Activated B cell treated with CpG ODN at 0.5 μM for 24 hours (primary cell): ENCODE measurements at regions of chr19 and their contacts with region 1.

Region 1: GRCh38 chr19:2663920-2664571 is 38.4 kb downstream of the GNG7 start:
- DNase-seq: peak; percentile 74
- ATAC-seq: peak; percentile 89
- H3K4me3 Mint-ChIP-seq: peak overlapping the region; percentile 64
- H3K27ac Mint-ChIP-seq: peak overlapping the region; percentile 94
- H3K4me1 Mint-ChIP-seq: peaks cover 57% of the 10 kb centered on the region
- H3K27me3 Mint-ChIP-seq: no peaks in the 10 kb centered on the region
- CTCF ChIP-seq: no peak

Region 2: DNA sequence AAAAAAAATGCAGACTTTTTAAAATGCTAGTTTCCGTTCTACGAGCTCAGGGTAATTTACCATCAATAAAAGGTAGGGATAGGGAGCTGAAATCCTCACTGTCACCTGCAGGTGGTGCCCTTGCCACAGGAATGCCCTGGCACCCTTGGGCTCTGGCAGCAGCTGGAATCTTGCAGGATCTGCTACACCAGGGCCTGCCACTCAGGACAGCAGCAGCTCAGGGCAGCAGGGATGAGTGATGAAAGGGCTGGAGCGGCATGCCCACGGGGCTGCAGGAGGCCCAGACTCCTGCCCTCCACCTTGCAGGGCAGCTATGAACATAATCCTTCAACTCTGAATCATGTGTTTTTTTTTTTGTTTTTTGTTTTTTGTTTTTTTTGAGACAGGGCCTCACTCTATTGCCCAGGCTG is 15.5 kb before region 1 on chr19:
- CTCF ChIA-PET with region 1: interaction called, 18 read pairs
- POLR2A ChIA-PET with region 1: interaction called, 9 read pairs
- intact Hi-C with region 1: no loop called
- DNase-seq: peak; percentile 75
- ATAC-seq: peak; percentile 87
- H3K4me3 Mint-ChIP-seq: no peak overlapping the region
- H3K27ac Mint-ChIP-seq: peak overlapping the region; percentile 35
- H3K4me1 Mint-ChIP-seq: peaks cover 43% of the 10 kb centered on the region
- H3K27me3 Mint-ChIP-seq: no peaks in the 10 kb centered on the region
- CTCF ChIP-seq: no peak

Region 3: GRCh38 chr19:2702162-2703076 is 38.4 kb after region 1 on chr19 and contains the start of gene GNG7:
- CTCF ChIA-PET with region 1: interaction called, 3 read pairs
- POLR2A ChIA-PET with region 1: interaction called, 24 read pairs
- intact Hi-C with region 1: loop called (anchors 1 kb)
- DNase-seq: peak; percentile 99
- ATAC-seq: peak; percentile 99
- H3K4me3 Mint-ChIP-seq: peak within 1 kb of the TSS; percentile 85
- H3K27ac Mint-ChIP-seq: peak within 1 kb of the TSS; percentile 89
- H3K4me1 Mint-ChIP-seq: peaks cover 53% of the 10 kb centered on the region
- H3K27me3 Mint-ChIP-seq: no peaks in the 10 kb centered on the region
- CTCF ChIP-seq: no peak
- total RNA-seq, gene GNG7: 34.8 and 35.4 TPM in 2 replicates

Region 4: GRCh38 chr19:2711172-2711874 is 47.3 kb after region 1 on chr19:
- CTCF ChIA-PET with region 1: no interaction called
- POLR2A ChIA-PET with region 1: interaction called, 6 read pairs
- intact Hi-C with region 1: loop called (anchors 1 kb)
- DNase-seq: no peak
- ATAC-seq: peak; percentile 5
- H3K4me3 Mint-ChIP-seq: peak overlapping the region; percentile 66
- H3K27ac Mint-ChIP-seq: peak overlapping the region; percentile 87
- H3K4me1 Mint-ChIP-seq: peaks cover 39% of the 10 kb centered on the region
- H3K27me3 Mint-ChIP-seq: no peaks in the 10 kb centered on the region
- CTCF ChIP-seq: no peak

Region 5: DNA sequence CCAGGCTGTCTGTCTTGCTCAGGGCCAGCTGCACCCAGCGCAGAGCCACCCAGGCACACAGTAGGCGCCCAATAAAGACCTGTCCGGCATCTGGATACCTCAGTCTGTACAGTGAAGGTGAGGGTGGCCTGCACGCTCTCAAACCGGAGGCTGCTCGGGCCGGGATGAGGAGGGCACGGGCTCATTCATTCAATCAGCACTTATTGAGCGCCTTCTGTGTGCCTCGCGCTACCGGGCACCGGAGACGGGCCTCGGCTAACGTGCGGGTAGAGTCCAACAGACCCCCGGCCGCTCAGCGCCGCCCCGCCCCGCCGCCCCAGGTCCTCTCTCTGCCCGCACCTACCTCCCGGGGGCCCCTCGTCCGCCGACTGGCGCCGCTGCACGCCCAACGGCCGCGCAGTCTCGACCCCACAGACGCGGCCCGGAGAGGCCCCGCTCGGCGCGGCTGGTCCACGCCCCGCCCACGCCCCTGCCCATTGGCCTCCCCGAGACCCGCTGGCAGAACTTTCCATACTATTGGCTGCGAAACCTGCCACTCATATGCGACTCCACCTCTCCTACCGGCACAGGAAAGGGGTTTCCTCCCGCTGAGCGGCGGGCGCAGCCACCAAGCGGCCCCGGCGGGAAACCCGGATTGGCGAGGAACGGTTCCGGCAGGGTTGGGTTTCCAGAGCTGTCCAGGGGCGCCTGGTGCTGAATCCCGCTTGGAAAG is 75.7 kb after region 1 on chr19 and contains the start of gene SLC39A3:
- CTCF ChIA-PET with region 1: no interaction called
- POLR2A ChIA-PET with region 1: interaction called, 20 read pairs
- intact Hi-C with region 1: loop called (anchors 2 kb)
- DNase-seq: peak; percentile 94
- ATAC-seq: peak; percentile 100
- H3K4me3 Mint-ChIP-seq: peak within 1 kb of the TSS; percentile 88
- H3K27ac Mint-ChIP-seq: peak within 1 kb of the TSS; percentile 65
- H3K4me1 Mint-ChIP-seq: peaks cover 28% of the 10 kb centered on the region
- H3K27me3 Mint-ChIP-seq: peaks cover 3% of the 10 kb centered on the region
- CTCF ChIP-seq: no peak
- total RNA-seq, gene SLC39A3: 33.8 and 34.3 TPM in 2 replicates

Region 6: GRCh38 chr19:2750808-2751443 is 86.9 kb after region 1 on chr19:
- CTCF ChIA-PET with region 1: interaction called, 21 read pairs
- POLR2A ChIA-PET with region 1: interaction called, 6 read pairs
- intact Hi-C with region 1: loop called (anchors 1 kb)
- DNase-seq: no peak
- ATAC-seq: no peak
- H3K4me3 Mint-ChIP-seq: no peak overlapping the region
- H3K27ac Mint-ChIP-seq: no peak overlapping the region
- H3K4me1 Mint-ChIP-seq: peaks cover 12% of the 10 kb centered on the region
- H3K27me3 Mint-ChIP-seq: no peaks in the 10 kb centered on the region
- CTCF ChIP-seq: no peak

Region 7: GRCh38 chr19:2867025-2867991 is 203.3 kb after region 1 on chr19 and contains the start of gene ZNF556:
- CTCF ChIA-PET with region 1: no interaction called
- POLR2A ChIA-PET with region 1: no interaction called
- intact Hi-C with region 1: loop called (anchors 5 kb)
- DNase-seq: no peak
- ATAC-seq: no peak
- H3K4me3 Mint-ChIP-seq: no peak within 1 kb of the TSS
- H3K27ac Mint-ChIP-seq: no peak within 1 kb of the TSS
- H3K4me1 Mint-ChIP-seq: peaks cover 3% of the 10 kb centered on the region
- H3K27me3 Mint-ChIP-seq: peaks cover 13% of the 10 kb centered on the region
- CTCF ChIP-seq: no peak
- total RNA-seq, gene ZNF556: not detected in 2 replicates

Region 8: DNA sequence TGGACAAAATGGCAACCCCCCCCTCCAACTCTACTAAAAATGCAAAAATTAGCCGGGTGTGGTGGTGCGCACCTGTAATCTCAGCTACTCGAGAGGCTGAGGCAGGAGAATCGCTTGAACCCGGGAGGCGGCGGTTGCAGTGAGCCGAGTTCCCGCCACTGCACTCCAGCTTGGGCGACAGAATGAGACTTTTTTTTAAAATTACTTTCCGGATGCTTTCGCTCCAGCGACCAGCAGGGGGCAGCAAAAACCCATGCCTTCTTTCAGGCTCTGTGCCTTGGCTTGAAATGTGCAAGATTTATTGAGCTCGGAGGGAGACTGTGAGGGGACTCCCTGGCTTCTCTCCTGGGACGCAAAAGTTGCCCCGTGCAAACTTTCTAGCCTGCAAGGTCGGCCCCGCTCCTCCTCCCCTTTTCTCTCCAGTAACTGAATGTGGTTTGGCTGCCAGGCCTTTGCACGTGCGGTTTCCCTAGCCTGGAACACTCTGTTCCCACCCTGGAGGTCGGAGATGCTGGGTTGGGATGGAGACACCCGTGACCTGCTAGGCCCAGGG is 640.9 kb after region 1 on chr19:
- CTCF ChIA-PET with region 1: no interaction called
- POLR2A ChIA-PET with region 1: no interaction called
- intact Hi-C with region 1: no loop called
- DNase-seq: peak; percentile 67
- ATAC-seq: peak; percentile 79
- H3K4me3 Mint-ChIP-seq: no peak overlapping the region
- H3K27ac Mint-ChIP-seq: no peak overlapping the region
- H3K4me1 Mint-ChIP-seq: no peaks in the 10 kb centered on the region
- H3K27me3 Mint-ChIP-seq: peaks cover 21% of the 10 kb centered on the region
- CTCF ChIP-seq: no peak